ENCODE measurements at regions of chr21 and their contacts with region 1.

Region 1: GRCh38 chr21:38306433-38307141 is 49.8 kb downstream of the KCNJ15 start:
- DNase-seq: peak; percentile 99
- H3K4me3 ChIP-seq: no peak overlapping the region
- CTCF ChIP-seq: no peak

Region 2: DNA sequence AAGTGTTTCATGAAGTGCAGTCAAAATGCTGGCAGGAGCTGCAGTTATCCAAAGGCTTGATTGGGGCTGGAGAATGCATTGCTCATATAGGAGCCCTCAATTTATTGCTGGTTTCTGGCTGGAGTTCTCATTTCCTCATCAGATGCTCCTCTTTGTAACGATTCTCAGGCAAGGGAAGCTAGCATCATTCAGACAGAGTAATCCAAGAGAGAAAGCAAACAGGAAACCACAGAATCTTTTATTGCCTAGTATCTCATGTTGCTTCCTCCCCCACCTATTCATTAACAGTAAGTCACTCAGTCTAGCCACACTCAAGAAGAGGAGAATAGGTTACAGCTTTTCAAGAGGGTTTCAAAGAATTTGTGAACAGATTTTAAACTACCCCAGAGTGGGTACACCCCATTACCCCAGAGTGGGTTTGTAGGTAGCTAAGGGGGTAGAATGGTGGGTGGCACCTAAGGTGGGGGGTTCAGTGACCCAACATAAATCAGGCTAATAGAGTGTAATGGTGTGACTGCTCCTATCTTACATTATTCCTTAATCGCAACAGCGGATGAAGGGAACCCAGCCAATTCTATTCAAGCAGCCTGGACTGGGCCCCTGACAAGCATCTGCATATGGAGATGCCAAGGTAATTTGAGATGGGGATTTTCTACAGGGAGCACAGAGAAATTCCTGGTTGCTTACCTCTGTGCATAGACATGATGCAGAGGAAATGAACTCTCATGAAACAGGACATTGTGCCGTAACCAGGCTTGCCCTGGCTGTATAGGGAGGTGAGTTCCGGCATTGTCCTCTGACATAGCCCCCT is 17.3 kb after region 1 on chr21:
- CTCF ChIA-PET with region 1: interaction called, 7 read pairs
- POLR2A ChIA-PET with region 1: interaction called, 12 read pairs
- DNase-seq: peak; percentile 92
- H3K4me3 ChIP-seq: no peak overlapping the region
- CTCF ChIP-seq: no peak

Measured in AG04449 (cell line).